AG04450 (cell line): ENCODE measurements at regions of chr5 and their contacts with region 1.

Region 1: DNA sequence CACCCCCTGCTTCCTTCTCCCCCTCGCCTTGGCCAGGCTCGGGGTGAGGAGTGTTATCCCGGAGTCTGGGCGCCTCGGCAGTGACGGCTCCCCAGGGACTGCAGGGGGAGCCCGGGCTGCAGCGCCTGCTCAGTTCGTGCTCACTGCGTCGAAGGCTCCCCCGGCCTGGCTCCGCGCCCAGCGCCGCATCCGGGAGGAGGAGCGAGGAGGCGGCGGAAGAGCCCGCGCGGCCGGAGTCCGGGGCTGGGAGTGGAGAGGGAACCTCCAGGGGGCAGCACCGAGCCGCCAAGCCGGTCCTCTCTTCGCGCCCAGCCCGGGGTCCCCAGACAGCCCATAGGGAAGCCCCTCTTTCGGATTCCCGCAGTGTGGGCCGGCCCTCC is 1.3 kb upstream of the EGR1 start:
- DNase-seq: peak; percentile 93
- H3K4me3 ChIP-seq: peak overlapping the region; percentile 94
- H3K27ac ChIP-seq: peak overlapping the region; percentile 96
- H3K27me3 ChIP-seq: no peaks in the 10 kb centered on the region
- CTCF ChIP-seq: peak; percentile 74

Region 2: DNA sequence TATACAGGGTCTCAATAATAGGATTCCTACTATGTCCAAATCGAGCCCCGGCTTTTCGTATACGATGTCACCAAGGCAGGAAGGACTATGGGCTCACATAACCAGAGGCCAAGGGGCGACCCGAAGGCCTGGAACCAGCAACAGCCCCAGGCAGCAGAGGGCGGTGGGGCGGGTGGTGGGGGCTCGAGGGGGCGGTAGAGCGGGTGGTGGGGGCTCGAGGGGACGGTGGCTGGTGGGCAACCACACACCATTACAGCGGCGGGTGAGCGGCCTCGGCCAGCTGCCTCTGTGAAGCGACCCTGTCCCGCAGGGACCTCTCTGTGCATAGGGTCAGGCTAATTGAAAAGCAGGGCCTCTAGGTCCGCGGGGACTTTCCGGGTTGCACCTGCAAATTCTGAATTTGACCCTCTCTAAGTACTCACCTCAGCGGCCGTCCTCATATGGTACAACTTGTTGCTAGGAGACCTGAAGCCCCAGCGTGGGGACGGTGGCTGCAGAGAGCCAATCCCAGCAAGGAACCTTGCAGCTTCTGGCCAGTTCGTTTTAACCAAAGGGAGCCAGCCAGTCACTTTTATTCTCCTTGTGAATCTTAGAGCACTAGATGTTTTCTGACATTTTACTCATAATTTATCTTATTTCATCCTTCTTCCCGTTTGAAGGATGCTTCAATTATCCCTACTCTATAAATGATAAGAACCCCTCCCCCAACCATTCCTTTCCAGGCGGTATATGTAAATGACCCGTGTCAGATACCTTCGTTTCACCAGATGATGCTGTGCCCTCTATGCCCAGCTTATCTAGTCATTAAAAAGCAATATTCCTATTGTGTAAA is 324.8 kb before region 1 on chr5 and contains the start of gene NME5:
- CTCF ChIA-PET with region 1: no interaction called
- POLR2A ChIA-PET with region 1: no interaction called
- DNase-seq: no peak
- H3K4me3 ChIP-seq: peak within 1 kb of the TSS; percentile 55
- H3K27ac ChIP-seq: no peak within 1 kb of the TSS
- H3K27me3 ChIP-seq: no peaks in the 10 kb centered on the region
- CTCF ChIP-seq: no peak
- polyA plus RNA-seq, gene NME5: 0.35 and 0.43 TPM in 2 replicates

Region 3: GRCh38 chr5:138159666-138160065 is 304.3 kb before region 1 on chr5:
- CTCF ChIA-PET with region 1: no interaction called
- POLR2A ChIA-PET with region 1: no interaction called
- DNase-seq: no peak
- H3K4me3 ChIP-seq: no peak overlapping the region
- H3K27ac ChIP-seq: no peak overlapping the region
- H3K27me3 ChIP-seq: no peaks in the 10 kb centered on the region
- CTCF ChIP-seq: no peak

Region 4: DNA sequence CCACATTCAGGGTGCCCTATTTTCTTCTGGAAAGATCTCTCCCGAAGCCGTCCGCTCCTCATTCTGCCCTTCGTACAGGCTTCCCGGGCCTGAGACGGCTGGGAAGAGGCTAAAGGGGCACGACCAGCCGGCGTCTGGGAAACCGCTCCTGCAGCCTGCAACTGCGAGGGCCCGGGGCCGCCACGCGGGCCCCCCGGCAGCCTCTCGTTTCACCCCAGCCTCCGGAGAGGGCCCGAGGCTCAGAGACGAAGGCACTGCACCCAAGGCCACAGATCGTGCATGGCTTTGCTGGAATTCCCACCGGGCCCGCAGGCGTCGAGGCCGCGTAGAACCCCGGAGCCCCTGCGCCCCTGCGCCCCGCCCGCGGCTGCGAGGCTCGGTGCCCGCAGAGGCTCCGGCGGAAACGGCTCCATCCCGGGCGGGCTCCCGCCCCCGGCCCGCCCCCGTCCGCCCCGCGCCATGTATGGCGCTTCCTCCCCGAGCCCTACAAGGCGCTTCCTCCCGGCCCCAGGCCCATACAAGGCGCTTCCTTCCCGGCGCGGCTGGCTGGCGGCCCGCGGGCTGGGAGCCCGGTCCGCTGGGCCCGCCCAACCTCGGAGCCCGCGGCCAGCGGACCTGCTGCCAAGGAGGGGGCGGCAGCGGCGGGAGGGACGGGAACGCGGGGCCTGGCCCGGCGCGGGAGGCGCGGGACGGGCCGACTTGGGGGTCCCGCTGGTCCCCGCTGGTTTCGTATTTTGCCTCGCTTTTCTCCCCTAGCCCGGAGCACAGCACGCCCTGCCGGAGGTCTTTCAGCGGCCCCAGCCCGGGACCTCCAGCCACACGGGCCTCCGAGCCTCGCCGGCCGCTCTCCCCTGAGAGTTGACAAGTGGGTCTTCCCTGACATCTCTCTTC is 27.9 kb after region 1 on chr5:
- CTCF ChIA-PET with region 1: interaction called, 8 read pairs
- POLR2A ChIA-PET with region 1: interaction called, 12 read pairs
- DNase-seq: peak; percentile 74
- H3K4me3 ChIP-seq: peak overlapping the region; percentile 62
- H3K27ac ChIP-seq: no peak overlapping the region
- H3K27me3 ChIP-seq: no peaks in the 10 kb centered on the region
- CTCF ChIP-seq: no peak

Region 5: GRCh38 chr5:138498376-138498775 is 34.4 kb after region 1 on chr5:
- CTCF ChIA-PET with region 1: interaction called, 32 read pairs
- POLR2A ChIA-PET with region 1: interaction called, 26 read pairs
- DNase-seq: no peak
- H3K4me3 ChIP-seq: no peak overlapping the region
- H3K27ac ChIP-seq: no peak overlapping the region
- H3K27me3 ChIP-seq: no peaks in the 10 kb centered on the region
- CTCF ChIP-seq: no peak

Region 6: DNA sequence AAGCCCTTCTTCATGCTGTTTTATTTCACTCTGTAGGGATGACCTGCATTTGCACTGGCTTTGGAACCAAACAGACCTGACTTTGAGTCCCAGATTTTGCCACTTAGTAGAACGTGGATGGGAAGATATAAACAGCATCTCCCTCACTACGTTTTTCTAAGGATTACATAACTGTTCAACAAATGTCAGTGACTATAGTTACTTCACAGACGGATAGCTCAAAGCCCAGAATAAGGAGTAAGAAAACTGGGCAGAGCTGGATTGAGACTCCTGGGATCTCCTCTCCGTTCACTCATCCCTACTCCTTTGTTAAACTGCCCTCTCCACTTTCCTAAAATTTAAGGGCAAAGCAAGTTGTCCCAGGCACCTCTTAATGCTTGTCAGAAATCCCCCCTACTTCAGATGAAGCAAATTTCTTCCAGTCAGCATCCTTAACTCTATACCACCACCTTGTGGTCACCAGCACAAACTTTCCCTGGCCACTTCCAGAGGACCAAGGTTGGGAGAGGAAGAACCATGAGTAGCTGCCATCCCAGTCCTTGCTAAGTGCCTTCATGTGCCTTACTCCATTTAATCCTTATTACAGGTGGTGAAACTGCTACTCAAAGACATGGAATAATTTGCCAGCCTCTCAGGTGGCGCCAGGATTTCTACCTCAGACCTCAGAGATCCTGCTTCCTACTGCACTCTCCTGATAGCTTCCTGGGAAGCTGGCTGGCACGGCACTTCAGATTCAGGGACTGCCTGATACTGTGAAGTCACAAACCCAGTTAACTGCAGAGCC is 39.7 kb after region 1 on chr5:
- CTCF ChIA-PET with region 1: interaction called, 32 read pairs
- POLR2A ChIA-PET with region 1: interaction called, 26 read pairs
- DNase-seq: peak; percentile 46
- H3K4me3 ChIP-seq: no peak overlapping the region
- H3K27ac ChIP-seq: peak overlapping the region; percentile 21
- H3K27me3 ChIP-seq: no peaks in the 10 kb centered on the region
- CTCF ChIP-seq: peak; percentile 88

Region 7: GRCh38 chr5:138542956-138543729 is 79.1 kb after region 1 on chr5 and contains the start of gene ETF1:
- CTCF ChIA-PET with region 1: no interaction called
- POLR2A ChIA-PET with region 1: interaction called, 22 read pairs
- DNase-seq: peak; percentile 99
- H3K4me3 ChIP-seq: peak within 1 kb of the TSS; percentile 94
- H3K27ac ChIP-seq: peak within 1 kb of the TSS; percentile 100
- H3K27me3 ChIP-seq: no peaks in the 10 kb centered on the region
- CTCF ChIP-seq: no peak
- polyA plus RNA-seq, gene ETF1: 85.3 and 107 TPM in 2 replicates